ENCODE measurements at regions of chr16 and their contacts with region 1.

Region 1: DNA sequence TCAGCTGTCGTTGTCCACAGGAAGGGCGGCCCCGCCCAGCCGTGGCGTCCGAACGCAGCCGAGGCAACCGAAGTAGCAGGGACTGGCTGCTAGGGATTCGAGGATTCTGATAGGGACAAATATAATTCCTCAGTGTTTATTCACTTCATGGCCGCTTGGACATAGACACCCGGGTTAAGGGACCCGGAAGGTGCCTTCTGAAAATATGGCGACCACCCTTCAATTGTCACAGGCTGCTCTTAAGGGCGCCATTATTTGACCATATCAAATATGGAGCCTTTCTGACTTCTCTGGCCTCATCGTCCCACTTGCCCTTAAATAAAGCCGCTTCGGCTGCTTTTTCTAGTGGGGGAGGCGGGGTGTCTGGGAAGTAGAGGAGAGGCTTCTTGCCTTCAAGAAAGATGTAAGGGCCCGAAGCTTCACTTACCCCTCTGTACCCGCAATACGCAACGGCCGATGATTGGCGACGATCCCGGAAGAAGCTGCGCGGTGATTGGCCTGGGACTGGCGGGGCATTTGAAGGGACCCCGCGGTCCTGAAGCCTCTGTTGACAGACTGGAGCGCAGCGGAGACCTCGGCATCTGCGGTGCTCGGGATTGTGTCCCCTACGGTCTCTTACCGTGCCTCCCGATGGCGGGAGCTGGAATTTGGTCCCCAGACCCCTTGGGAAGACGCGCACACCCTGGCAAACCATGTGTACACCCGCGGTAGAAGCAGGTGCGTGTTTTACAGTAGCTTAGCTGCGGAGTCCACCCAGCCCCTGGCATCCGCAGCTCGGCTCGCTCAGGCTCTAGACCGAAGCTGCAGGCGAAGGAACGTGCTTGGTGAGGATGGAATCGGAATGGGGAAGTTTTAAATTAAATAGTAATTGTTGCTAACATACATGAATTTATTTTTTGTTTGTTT is at the start of gene ZNF688:
- DNase-seq: peak; percentile 96
- ATAC-seq: peak; percentile 90
- H3K4me3 ChIP-seq: peak within 1 kb of the TSS; percentile 57
- H3K27ac ChIP-seq: peak within 1 kb of the TSS; percentile 89
- H3K4me1 ChIP-seq: peaks cover 9% of the 10 kb centered on the region
- H3K27me3 ChIP-seq: no peaks in the 10 kb centered on the region
- CTCF ChIP-seq: no peak
- POLR2A ChIP-seq: no peak
- RAD21 ChIP-seq: no peak
- total RNA-seq, gene ZNF688: 1.7 and 1.8 TPM in 2 replicates

Region 2: GRCh38 chr16:30359128-30360104 is 212.5 kb before region 1 on chr16:
- CTCF ChIA-PET with region 1: no interaction called
- POLR2A ChIA-PET with region 1: no interaction called
- dilution Hi-C with region 1: no loop called
- in situ Hi-C with region 1: no loop called
- intact Hi-C with region 1: no loop called
- DNase-seq: no peak
- ATAC-seq: no peak
- H3K4me3 ChIP-seq: no peak overlapping the region
- H3K27ac ChIP-seq: no peak overlapping the region
- H3K4me1 ChIP-seq: peaks cover 5% of the 10 kb centered on the region; the same call in 1 of the 2 replicates
- H3K27me3 ChIP-seq: no peaks in the 10 kb centered on the region
- CTCF ChIP-seq: no peak
- POLR2A ChIP-seq: no peak
- RAD21 ChIP-seq: no peak

Region 3: GRCh38 chr16:30541502-30542329 is 30.2 kb before region 1 on chr16:
- CTCF ChIA-PET with region 1: no interaction called
- POLR2A ChIA-PET with region 1: no interaction called
- dilution Hi-C with region 1: no loop called
- in situ Hi-C with region 1: loop called (anchors 5 kb)
- intact Hi-C with region 1: loop called (anchors 1 kb)
- DNase-seq: peak; percentile 82
- ATAC-seq: peak; percentile 98
- H3K4me3 ChIP-seq: no peak overlapping the region
- H3K27ac ChIP-seq: peak overlapping the region; percentile 38; the same call in 1 of the 2 replicates
- H3K4me1 ChIP-seq: peaks cover 10% of the 10 kb centered on the region; the same call in 1 of the 2 replicates
- H3K27me3 ChIP-seq: no peaks in the 10 kb centered on the region
- CTCF ChIP-seq: no peak
- POLR2A ChIP-seq: no peak
- RAD21 ChIP-seq: no peak

Region 4: GRCh38 chr16:30657866-30658730 is 86.2 kb after region 1 on chr16 and contains the start of gene FBRS:
- CTCF ChIA-PET with region 1: no interaction called
- POLR2A ChIA-PET with region 1: no interaction called
- dilution Hi-C with region 1: no loop called
- in situ Hi-C with region 1: no loop called
- intact Hi-C with region 1: no loop called
- DNase-seq: peak; percentile 100
- ATAC-seq: peak; percentile 83
- H3K4me3 ChIP-seq: peak within 1 kb of the TSS; percentile 62
- H3K27ac ChIP-seq: peak within 1 kb of the TSS; percentile 92
- H3K4me1 ChIP-seq: peaks cover 12% of the 10 kb centered on the region; the same call in 1 of the 2 replicates
- H3K27me3 ChIP-seq: no peaks in the 10 kb centered on the region
- CTCF ChIP-seq: peak; percentile 98
- POLR2A ChIP-seq: peak; percentile 91
- RAD21 ChIP-seq: peak; percentile 69
- total RNA-seq, gene FBRS: 2.0 and 2.8 TPM in 2 replicates